A673 (cell line): ENCODE measurements at regions of chr12 and their contacts with region 1.

Region 1: DNA sequence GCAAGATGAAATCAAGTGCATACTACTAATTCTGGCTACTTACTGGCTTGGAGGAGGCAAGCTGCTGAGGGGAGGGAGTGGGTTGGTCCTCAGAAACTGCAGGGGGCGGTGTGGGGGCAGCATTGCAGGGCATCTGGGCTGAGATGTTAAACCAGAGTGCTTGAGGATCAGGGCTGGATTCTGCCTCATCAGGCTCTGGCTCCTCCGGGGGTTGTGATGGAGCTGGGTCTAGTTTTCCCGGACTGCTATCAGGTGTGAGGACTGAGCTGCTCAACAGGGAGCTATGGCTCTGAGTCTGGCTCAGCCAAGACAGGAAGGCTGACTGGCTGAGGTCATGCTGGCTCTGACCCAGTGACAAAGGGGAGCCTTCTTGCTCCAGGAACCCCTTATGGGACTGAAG is 28.6 kb downstream of the BAZ2A start:
- DNase-seq: peak; percentile 24
- H3K4me3 ChIP-seq: no peak overlapping the region
- H3K27ac ChIP-seq: no peak overlapping the region
- H3K4me1 ChIP-seq: no peaks in the 10 kb centered on the region
- H3K27me3 ChIP-seq: no peaks in the 10 kb centered on the region
- CTCF ChIP-seq: no peak

Region 2: GRCh38 chr12:56286044-56286830 is 315.3 kb before region 1 on chr12:
- CTCF ChIA-PET with region 1: no interaction called
- POLR2A ChIA-PET with region 1: interaction called, 14 read pairs
- intact Hi-C with region 1: no loop called
- DNase-seq: no peak
- H3K4me3 ChIP-seq: no peak overlapping the region
- H3K27ac ChIP-seq: no peak overlapping the region
- H3K4me1 ChIP-seq: no peaks in the 10 kb centered on the region
- H3K27me3 ChIP-seq: no peaks in the 10 kb centered on the region
- CTCF ChIP-seq: no peak

Region 3: DNA sequence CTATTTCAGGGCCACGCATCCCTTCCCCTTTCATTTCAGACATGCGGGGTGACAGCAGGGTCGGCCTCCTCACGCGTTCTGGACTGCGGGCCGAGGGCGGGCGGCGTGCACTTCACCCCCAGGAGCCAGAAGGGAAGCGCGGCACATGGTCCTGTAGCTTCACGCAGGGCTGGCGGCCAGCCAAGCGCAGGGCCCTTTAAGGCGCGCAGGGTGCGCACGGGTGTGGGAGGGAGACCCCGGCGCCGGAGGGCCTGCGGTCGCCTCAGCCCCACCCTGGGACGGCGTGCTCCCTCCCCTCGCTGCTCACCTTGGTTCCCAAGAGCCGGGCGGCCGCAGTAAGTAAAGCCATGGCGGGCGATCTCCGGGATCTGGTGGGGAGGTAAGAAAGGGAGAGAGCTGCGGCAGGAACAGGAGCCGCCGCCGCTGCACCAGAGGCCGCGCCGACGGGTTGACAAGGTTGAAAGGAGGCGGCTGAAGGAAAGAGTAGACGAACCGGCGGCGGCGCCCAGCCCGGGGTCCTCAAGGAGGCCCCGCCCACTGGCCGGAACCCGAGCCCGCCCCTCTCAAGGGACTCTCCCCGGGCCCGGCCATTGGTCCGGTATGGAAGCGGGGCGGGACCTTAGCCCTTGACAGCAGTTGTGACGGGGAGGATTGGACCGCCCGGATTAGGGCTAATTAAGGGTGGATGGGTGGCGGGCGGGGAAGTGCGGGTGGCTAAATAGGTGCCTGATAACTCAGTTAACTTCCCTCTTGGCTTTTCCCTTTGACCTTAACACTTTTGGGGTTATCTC is 301.5 kb before region 1 on chr12 and contains the start of gene CS:
- CTCF ChIA-PET with region 1: no interaction called
- POLR2A ChIA-PET with region 1: no interaction called
- intact Hi-C with region 1: no loop called
- DNase-seq: peak; percentile 99
- H3K4me3 ChIP-seq: peak within 1 kb of the TSS; percentile 90
- H3K27ac ChIP-seq: peak within 1 kb of the TSS; percentile 86
- H3K4me1 ChIP-seq: peaks cover 28% of the 10 kb centered on the region
- H3K27me3 ChIP-seq: no peaks in the 10 kb centered on the region
- CTCF ChIP-seq: no peak
- total RNA-seq, gene CS: 412 and 448 TPM in 2 replicates